MCF 10A (cell line): ENCODE measurements at regions of chr3 and their contacts with region 1.

Region 1: GRCh38 chr3:47380601-47381316 is at the start of gene PTPN23:
- DNase-seq: peak; percentile 99
- H3K4me3 Mint-ChIP-seq: peak within 1 kb of the TSS; percentile 97
- H3K27ac Mint-ChIP-seq: peak within 1 kb of the TSS; percentile 99
- H3K4me1 Mint-ChIP-seq: peaks cover 31% of the 10 kb centered on the region
- H3K27me3 Mint-ChIP-seq: no peaks in the 10 kb centered on the region
- CTCF ChIP-seq: no peak
- total RNA-seq, gene PTPN23: 44.5 and 46.9 TPM in 2 replicates

Region 2: GRCh38 chr3:46976326-46977190 is 404.2 kb before region 1 on chr3 and contains the start of gene CCDC12:
- CTCF ChIA-PET with region 1: interaction called, 4 read pairs
- POLR2A ChIA-PET with region 1: interaction called, 12 read pairs
- intact Hi-C with region 1: no loop called
- DNase-seq: peak; percentile 100
- H3K4me3 Mint-ChIP-seq: peak within 1 kb of the TSS; percentile 97
- H3K27ac Mint-ChIP-seq: peak within 1 kb of the TSS; percentile 100
- H3K4me1 Mint-ChIP-seq: peaks cover 30% of the 10 kb centered on the region
- H3K27me3 Mint-ChIP-seq: no peaks in the 10 kb centered on the region
- CTCF ChIP-seq: no peak
- total RNA-seq, gene CCDC12: 43.9 and 45.9 TPM in 2 replicates

Region 3: DNA sequence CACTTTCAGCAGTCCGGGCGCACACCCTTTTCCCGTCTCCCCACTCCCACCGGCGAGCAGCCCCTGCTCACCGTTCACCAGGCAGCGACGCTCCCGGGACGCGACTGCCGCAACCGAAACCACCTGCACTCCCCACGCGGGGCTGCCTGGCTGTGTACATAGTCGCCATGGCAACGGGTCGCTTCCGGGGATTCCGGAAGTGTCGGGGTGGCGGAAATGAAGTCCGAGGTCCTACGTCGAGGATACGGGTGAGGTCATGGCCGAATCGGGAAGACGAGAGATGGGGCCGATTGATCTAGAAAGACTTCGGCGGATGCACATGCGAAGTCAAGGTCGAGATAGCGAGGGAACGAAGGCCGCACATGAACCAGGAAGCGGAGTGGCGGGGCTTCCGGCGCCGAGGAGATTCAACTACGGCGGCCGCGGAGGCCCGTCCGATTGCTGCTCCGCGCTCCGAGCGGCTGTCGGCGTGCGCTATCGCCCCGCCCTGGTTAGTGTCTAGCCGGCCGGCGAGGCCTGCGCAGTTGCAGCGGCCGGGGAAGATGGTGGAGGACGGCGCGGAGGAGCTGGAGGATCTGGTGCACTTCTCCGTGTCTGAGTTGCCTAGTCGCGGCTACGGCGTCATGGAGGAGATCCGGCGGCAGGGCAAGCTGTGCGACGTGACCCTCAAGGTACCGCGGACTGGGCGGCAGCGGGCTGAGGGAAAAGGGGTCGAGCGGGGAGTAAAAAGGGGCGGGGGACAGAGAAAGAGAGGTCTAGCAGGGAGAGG is 98.2 kb before region 1 on chr3 and contains the starts of genes KIF9 and KLHL18:
- CTCF ChIA-PET with region 1: no interaction called
- POLR2A ChIA-PET with region 1: interaction called, 11 read pairs
- intact Hi-C with region 1: loop called (anchors 5 kb)
- DNase-seq: peak; percentile 92
- H3K4me3 Mint-ChIP-seq: peak within 1 kb of the TSS; percentile 93
- H3K27ac Mint-ChIP-seq: peak within 1 kb of the TSS; percentile 100
- H3K4me1 Mint-ChIP-seq: peaks cover 24% of the 10 kb centered on the region
- H3K27me3 Mint-ChIP-seq: no peaks in the 10 kb centered on the region
- CTCF ChIP-seq: no peak
- total RNA-seq, gene KIF9: 6.7 and 9.5 TPM in 2 replicates
- total RNA-seq, gene KLHL18: 36.4 and 36.6 TPM in 2 replicates

Region 4: DNA sequence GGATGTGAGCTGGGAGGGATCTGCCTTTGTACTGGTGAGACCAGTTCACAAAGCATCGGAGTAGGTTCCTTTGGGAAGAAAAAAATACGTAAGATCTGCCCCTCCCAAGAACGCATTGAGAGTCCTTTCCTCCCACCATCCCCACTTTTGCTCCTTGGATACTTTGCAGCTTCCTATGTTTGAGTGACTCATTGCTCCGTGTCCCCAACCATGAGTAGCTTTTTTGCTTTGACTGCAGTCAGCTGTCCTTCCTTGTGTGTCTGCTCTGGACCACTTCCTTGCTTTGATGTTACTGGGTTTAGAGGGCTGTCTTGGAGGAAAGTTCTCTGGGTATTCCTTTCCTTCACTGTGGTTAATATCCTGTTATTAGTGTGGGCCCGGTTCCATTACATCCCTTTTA is 43.1 kb before region 1 on chr3:
- CTCF ChIA-PET with region 1: no interaction called
- POLR2A ChIA-PET with region 1: no interaction called
- intact Hi-C with region 1: no loop called
- DNase-seq: no peak
- H3K4me3 Mint-ChIP-seq: no peak overlapping the region
- H3K27ac Mint-ChIP-seq: no peak overlapping the region
- H3K4me1 Mint-ChIP-seq: no peaks in the 10 kb centered on the region
- H3K27me3 Mint-ChIP-seq: no peaks in the 10 kb centered on the region
- CTCF ChIP-seq: no peak

Region 5: GRCh38 chr3:47392933-47393332 is 12.2 kb after region 1 on chr3:
- CTCF ChIA-PET with region 1: no interaction called
- POLR2A ChIA-PET with region 1: interaction called, 10 read pairs
- intact Hi-C with region 1: no loop called
- DNase-seq: no peak
- H3K4me3 Mint-ChIP-seq: no peak overlapping the region
- H3K27ac Mint-ChIP-seq: no peak overlapping the region
- H3K4me1 Mint-ChIP-seq: peaks cover 4% of the 10 kb centered on the region
- H3K27me3 Mint-ChIP-seq: no peaks in the 10 kb centered on the region
- CTCF ChIP-seq: no peak

Region 6: DNA sequence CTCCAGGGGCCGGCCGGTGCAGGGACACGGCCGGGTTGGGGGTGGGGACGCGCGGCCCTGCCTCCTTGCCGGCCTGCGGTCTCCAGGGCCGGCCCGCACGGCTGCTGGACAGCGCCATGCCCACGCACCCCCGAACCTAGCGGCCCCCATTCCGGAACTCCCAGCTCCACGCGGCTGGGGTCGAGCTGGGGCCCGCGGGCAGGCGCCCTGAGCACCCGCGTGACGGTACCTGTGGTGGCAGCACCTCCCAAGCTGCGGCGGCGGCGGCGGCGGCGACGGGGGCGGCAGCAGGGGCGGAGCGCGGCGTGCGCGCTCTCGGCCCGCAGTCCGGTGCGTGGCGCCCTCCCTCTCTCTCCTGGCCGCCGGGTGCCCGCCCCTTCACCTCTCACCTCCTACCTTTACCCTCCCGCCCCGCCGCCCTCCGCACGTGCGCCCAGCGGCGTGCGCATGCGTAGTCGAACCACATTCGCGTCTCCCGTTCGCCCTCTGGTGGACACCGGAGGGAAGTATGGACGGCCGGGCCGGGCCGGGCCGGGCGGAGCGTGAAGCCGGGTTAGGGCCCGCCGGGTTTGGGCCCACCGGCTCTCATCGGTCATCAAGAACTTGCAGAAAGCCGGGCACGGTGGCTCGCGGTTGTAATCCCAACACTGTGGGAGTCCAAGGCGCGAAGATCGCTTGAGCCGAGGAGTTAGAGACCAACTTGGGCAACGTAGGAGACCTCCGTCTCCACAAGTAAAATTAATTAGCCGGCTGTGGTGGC is 95.0 kb after region 1 on chr3 and contains the start of gene SCAP:
- CTCF ChIA-PET with region 1: interaction called, 3 read pairs
- POLR2A ChIA-PET with region 1: interaction called, 12 read pairs
- intact Hi-C with region 1: no loop called
- DNase-seq: peak; percentile 89
- H3K4me3 Mint-ChIP-seq: peak within 1 kb of the TSS; percentile 99
- H3K27ac Mint-ChIP-seq: peak within 1 kb of the TSS; percentile 86
- H3K4me1 Mint-ChIP-seq: peaks cover 23% of the 10 kb centered on the region
- H3K27me3 Mint-ChIP-seq: no peaks in the 10 kb centered on the region
- CTCF ChIP-seq: peak; percentile 87
- total RNA-seq, gene SCAP: 84.3 and 87.8 TPM in 2 replicates